ENCODE measurements at regions of chr13 and their contacts with region 1.

Region 1: GRCh38 chr13:51452361-51453206 is at the start of gene INTS6:
- DNase-seq: peak; percentile 99
- ATAC-seq: peak; percentile 87
- H3K4me3 Mint-ChIP-seq: peak within 1 kb of the TSS; percentile 84
- H3K27ac Mint-ChIP-seq: peak within 1 kb of the TSS; percentile 97
- H3K4me1 Mint-ChIP-seq: peaks cover 33% of the 10 kb centered on the region
- H3K27me3 Mint-ChIP-seq: no peaks in the 10 kb centered on the region
- total RNA-seq, gene INTS6: 47.9 to 50.3 TPM

Region 2: DNA sequence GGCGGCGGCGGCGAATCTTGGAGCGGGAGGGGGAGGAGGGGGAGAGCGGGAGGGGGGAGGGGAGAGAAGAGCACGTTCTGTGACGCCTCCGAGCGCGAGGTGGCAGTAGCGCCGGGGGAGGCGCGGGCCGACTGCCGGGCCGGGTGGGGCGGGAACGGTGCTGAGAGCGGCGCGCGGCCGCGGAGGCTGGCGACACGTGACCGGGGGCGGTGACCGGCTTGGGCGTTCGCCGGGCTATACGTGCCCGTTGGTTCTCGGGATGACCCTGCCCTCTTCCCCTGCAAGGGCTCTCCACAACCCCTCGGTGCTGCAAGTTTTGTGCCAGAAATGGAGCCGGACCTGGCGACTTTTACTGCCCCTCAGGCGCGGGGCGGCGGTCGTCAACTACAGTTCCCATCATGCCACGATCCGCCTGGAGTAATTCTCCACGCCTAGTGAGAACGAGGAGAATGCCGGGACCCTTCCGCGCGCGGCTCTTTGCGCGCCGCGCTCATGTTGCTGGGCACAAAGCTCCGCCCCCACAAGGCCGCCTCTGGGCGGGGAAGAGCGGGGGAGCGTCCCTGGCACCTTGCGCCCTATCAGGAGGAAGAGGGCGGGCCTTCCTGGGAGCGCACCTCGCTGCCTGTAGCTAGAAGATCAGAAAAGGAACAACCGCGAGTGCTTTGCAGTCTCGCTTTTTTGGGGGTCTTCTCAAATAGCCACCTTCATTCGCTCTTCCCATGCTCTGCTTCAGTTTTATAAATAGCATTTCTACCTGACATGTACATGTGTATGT is 1659.8 kb before region 1 on chr13 and contains the start of gene KPNA3:
- CTCF ChIA-PET with region 1: no interaction called
- POLR2A ChIA-PET with region 1: no interaction called
- intact Hi-C with region 1: loop called in 1 of 2 experiments (anchors 2 kb)
- DNase-seq: peak; percentile 98
- ATAC-seq: peak; percentile 93
- H3K4me3 Mint-ChIP-seq: peak within 1 kb of the TSS; percentile 89
- H3K27ac Mint-ChIP-seq: peak within 1 kb of the TSS; percentile 88
- H3K4me1 Mint-ChIP-seq: peaks cover 30% of the 10 kb centered on the region
- H3K27me3 Mint-ChIP-seq: peaks cover 4% of the 10 kb centered on the region
- total RNA-seq, gene KPNA3: 51.7 to 58.0 TPM

Region 3: DNA sequence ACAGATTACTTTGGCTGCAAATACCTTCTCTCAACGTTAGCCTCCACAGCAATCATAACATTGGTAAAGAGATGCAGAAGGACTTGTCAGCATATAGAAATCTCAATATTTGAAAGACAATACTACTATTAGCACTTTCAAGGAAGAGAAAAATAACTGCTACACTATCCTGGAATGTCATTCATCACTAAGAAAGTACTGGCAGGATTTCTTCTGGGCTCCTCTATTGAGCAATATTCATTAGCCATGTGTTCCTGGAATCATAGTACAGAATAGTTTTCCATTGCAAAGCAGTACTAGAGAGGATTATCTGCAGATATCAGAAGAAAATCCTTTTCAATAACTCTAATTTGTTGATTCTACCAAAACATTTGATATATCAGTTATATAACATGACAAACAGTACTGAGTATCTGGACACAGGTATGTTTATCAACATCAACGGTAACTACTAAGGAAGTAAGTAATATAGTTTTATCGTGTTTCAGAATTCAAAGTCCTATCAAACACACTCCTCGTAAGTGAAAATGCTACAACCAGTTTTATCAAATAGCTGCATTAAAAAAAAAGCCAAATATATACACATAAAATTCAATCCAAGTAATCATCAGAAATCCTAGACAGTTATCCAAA is 27.1 kb before region 1 on chr13:
- CTCF ChIA-PET with region 1: interaction called, 4 read pairs
- POLR2A ChIA-PET with region 1: interaction called, 3 read pairs
- intact Hi-C with region 1: loop called in 1 of 2 experiments (anchors 2 kb)
- DNase-seq: no peak
- ATAC-seq: no peak
- H3K4me3 Mint-ChIP-seq: no peak overlapping the region
- H3K27ac Mint-ChIP-seq: no peak overlapping the region
- H3K4me1 Mint-ChIP-seq: peaks cover 72% of the 10 kb centered on the region
- H3K27me3 Mint-ChIP-seq: no peaks in the 10 kb centered on the region

Region 4: GRCh38 chr13:51583875-51584730 is 131.5 kb after region 1 on chr13 and contains the start of gene WDFY2:
- CTCF ChIA-PET with region 1: interaction called, 3 read pairs
- POLR2A ChIA-PET with region 1: interaction called, 46 read pairs
- intact Hi-C with region 1: loop called (anchors 1 kb)
- DNase-seq: peak; percentile 100
- ATAC-seq: peak; percentile 88
- H3K4me3 Mint-ChIP-seq: peak within 1 kb of the TSS; percentile 89
- H3K27ac Mint-ChIP-seq: peak within 1 kb of the TSS; percentile 95
- H3K4me1 Mint-ChIP-seq: peaks cover 37% of the 10 kb centered on the region
- H3K27me3 Mint-ChIP-seq: no peaks in the 10 kb centered on the region
- total RNA-seq, gene WDFY2: 7.4 to 9.5 TPM

Region 5: DNA sequence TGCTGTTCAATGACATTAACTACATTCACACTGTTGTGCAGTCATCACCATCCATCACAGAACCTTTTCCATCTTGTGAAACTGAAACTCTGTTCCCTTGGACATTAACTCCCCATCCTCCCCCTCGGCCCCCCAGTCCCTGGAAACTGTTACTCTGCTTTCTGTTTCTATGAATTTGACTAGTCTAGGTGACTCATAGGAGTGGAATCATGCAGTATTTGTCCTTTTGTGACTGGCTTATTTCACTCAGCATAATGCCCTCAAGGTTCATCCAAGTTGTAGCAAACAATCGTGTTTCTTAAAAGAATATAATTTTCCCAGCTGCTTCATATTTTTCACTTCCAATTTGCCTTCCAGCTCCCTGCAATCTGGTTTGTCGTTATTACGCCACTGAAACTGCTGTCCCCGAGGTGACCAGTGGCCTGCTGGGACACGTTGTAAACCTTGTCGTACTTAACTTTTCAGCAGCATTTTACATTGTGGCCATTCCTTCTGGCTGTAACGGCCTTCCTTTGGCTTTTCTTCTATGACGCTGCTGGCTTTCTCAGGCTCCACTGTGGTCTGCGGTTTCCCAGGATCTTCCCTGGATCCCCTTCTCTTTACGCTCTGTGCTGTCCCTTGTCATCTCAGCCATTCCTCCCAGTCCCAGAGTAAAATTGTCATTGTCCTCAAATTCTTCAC is 277.4 kb after region 1 on chr13:
- CTCF ChIA-PET with region 1: no interaction called
- POLR2A ChIA-PET with region 1: no interaction called
- intact Hi-C with region 1: loop called in 1 of 2 experiments (anchors 5 kb)
- DNase-seq: peak; percentile 75
- ATAC-seq: peak; percentile 89
- H3K4me3 Mint-ChIP-seq: no peak overlapping the region
- H3K27ac Mint-ChIP-seq: no peak overlapping the region
- H3K4me1 Mint-ChIP-seq: peaks cover 3% of the 10 kb centered on the region
- H3K27me3 Mint-ChIP-seq: no peaks in the 10 kb centered on the region

Region 6: DNA sequence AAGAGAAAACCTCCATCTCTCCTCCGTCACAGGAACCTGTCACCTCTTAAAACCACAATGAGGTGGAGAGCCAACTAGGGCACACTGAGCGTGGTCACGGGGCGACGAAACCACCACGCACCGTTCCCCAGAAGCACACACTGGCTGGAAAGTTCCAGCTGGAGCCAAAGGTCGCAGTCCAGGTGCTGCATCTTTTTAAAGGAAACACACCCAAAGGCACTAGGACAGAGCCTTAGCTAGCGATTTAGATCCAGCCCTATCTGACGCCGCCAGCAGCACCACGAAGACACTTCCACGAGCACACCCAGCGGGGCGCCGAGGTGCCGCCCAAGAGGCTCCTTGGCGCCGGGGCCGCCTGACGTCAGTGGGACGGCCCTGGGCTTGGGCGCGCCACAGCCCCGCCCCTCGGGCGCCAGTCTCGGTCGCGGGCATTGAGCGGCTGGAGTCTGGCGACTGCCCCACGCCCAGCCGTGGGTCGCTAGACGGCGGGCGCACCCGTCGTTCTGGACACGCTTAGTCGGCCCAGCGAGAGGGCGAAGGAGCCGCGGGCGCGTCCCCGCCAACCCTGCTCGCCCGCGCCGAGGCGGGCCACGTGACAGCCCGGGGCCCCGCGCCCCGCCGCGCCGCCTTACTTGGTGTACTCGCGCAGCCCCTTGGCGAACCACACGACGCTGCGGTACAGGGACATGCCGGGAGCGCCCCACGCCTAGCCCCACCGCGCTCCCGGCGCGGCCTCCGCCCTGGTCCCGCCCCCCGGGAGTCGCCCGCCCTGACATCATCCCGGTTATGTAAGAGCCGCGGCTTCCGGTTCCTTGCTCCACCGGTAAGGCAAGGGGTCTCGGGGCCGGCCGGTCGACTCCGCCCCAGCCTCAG is 351.1 kb after region 1 on chr13 and contains the start of gene DHRS12:
- CTCF ChIA-PET with region 1: interaction called, 3 read pairs
- POLR2A ChIA-PET with region 1: interaction called, 30 read pairs
- intact Hi-C with region 1: loop called (anchors 1 kb)
- DNase-seq: peak; percentile 90
- ATAC-seq: peak; percentile 77
- H3K4me3 Mint-ChIP-seq: peak within 1 kb of the TSS; percentile 87
- H3K27ac Mint-ChIP-seq: peak within 1 kb of the TSS; percentile 99
- H3K4me1 Mint-ChIP-seq: peaks cover 50% of the 10 kb centered on the region
- H3K27me3 Mint-ChIP-seq: no peaks in the 10 kb centered on the region
- total RNA-seq, gene DHRS12: 4.9 to 5.3 TPM

Region 7: DNA sequence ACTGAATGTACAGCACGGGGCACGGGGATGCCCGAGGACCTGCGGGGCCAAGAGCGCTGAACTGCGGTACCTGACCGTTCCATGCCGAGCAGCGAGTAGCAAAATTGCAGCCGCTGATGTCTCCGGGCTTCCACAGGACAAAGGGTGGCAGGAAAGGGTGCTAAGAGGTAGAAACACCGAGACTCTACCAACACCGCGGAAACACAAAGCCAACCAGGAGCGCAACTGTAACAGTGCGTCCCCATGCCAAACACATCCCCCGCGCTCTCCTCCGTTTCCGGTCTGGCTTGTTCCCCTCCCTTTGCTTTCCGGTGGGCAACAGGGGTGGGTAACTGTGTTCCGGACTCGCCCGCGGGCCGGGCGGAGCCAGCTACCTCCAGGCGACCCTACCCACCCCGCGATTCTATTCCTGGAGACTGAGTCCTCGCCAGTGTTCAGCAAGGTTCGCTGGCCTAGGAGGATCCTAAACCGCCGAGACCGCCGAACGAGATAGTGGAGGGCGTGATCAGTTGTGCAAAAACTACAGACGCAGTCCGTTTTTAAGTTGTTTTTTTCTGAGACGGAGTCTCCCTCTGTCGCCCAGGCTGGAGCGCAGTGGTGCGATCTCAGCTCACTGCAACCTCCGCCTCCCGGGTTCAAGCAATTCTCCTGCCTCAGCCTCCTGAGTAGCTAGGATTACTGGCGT is 741.7 kb after region 1 on chr13:
- CTCF ChIA-PET with region 1: no interaction called
- POLR2A ChIA-PET with region 1: no interaction called
- intact Hi-C with region 1: loop called in 1 of 2 experiments (anchors 1 kb)
- DNase-seq: peak; percentile 92
- ATAC-seq: peak; percentile 83
- H3K4me3 Mint-ChIP-seq: peak overlapping the region; percentile 86
- H3K27ac Mint-ChIP-seq: peak overlapping the region; percentile 100
- H3K4me1 Mint-ChIP-seq: peaks cover 32% of the 10 kb centered on the region
- H3K27me3 Mint-ChIP-seq: no peaks in the 10 kb centered on the region

Measured in activated CD4-positive, alpha-beta T cell treated with anti-CD3 and anti-CD28 coated beads for 36 hours (primary cell).